Activated CD4-positive, alpha-beta T cell treated with anti-CD3 and anti-CD28 coated beads for 36 hours (primary cell): ENCODE measurements at regions of chr7 and their contacts with region 1.

Region 1: GRCh38 chr7:136142583-136142982 is 165.4 kb upstream of the MTPN start:
- DNase-seq: no peak
- ATAC-seq: no peak
- H3K4me3 Mint-ChIP-seq: no peak overlapping the region
- H3K27ac Mint-ChIP-seq: no peak overlapping the region
- H3K4me1 Mint-ChIP-seq: peaks cover 3% of the 10 kb centered on the region
- H3K27me3 Mint-ChIP-seq: no peaks in the 10 kb centered on the region

Region 2: DNA sequence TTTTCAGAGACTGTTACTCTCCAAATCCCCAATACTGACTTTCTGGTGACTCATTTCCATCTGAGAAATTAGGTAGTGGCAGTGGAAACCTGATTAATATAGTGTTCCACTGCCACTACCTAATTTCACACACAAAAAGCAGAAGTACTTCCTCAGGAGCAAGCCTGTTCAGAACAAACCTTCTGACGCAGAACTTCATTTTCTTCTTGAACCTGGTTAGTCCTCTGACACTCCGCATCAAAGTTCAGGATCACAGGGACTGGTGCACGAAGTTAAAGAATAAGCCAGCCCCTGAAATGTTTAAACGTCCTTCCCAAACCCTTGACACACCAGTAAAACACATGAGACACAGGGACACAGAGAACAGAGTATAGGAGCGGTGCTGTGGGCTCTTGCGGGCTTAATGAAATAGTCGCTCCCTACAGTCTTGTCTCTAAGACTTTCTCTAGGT is 935.6 kb before region 1 on chr7:
- CTCF ChIA-PET with region 1: no interaction called
- POLR2A ChIA-PET with region 1: no interaction called
- intact Hi-C with region 1: no loop called
- DNase-seq: no peak
- ATAC-seq: no peak
- H3K4me3 Mint-ChIP-seq: no peak overlapping the region
- H3K27ac Mint-ChIP-seq: peak overlapping the region; percentile 21
- H3K4me1 Mint-ChIP-seq: peaks cover 54% of the 10 kb centered on the region
- H3K27me3 Mint-ChIP-seq: no peaks in the 10 kb centered on the region

Region 3: GRCh38 chr7:136074831-136075230 is 67.8 kb before region 1 on chr7:
- CTCF ChIA-PET with region 1: no interaction called
- POLR2A ChIA-PET with region 1: interaction called, 13 read pairs
- intact Hi-C with region 1: no loop called
- DNase-seq: no peak
- ATAC-seq: no peak
- H3K4me3 Mint-ChIP-seq: no peak overlapping the region
- H3K27ac Mint-ChIP-seq: no peak overlapping the region
- H3K4me1 Mint-ChIP-seq: no peaks in the 10 kb centered on the region
- H3K27me3 Mint-ChIP-seq: no peaks in the 10 kb centered on the region